Activated CD8-positive, alpha-beta T cell treated with anti-CD3 and anti-CD28 coated beads for 36 hours (primary cell): ENCODE measurements at regions of chr12 and their contacts with region 1.

Region 1: GRCh38 chr12:49967042-49967776 is 5.5 kb downstream of the AQP5 start:
- DNase-seq: peak; percentile 96
- ATAC-seq: peak; percentile 89
- H3K4me3 Mint-ChIP-seq: peak overlapping the region; percentile 61
- H3K27ac Mint-ChIP-seq: no peak overlapping the region
- H3K4me1 Mint-ChIP-seq: no peaks in the 10 kb centered on the region
- H3K27me3 Mint-ChIP-seq: peaks cover 24% of the 10 kb centered on the region
- CTCF ChIP-seq: peak; percentile 92

Region 2: GRCh38 chr12:49789992-49790391 is 177.2 kb before region 1 on chr12:
- CTCF ChIA-PET with region 1: no interaction called
- POLR2A ChIA-PET with region 1: no interaction called
- intact Hi-C with region 1: no loop called
- DNase-seq: no peak
- ATAC-seq: no peak
- H3K4me3 Mint-ChIP-seq: no peak overlapping the region
- H3K27ac Mint-ChIP-seq: no peak overlapping the region
- H3K4me1 Mint-ChIP-seq: no peaks in the 10 kb centered on the region
- H3K27me3 Mint-ChIP-seq: no peaks in the 10 kb centered on the region
- CTCF ChIP-seq: no peak

Region 3: GRCh38 chr12:49866859-49867579 is 100.2 kb before region 1 on chr12:
- CTCF ChIA-PET with region 1: interaction called, 33 read pairs
- POLR2A ChIA-PET with region 1: no interaction called
- intact Hi-C with region 1: no loop called
- DNase-seq: peak; percentile 85
- ATAC-seq: peak; percentile 98
- H3K4me3 Mint-ChIP-seq: no peak overlapping the region
- H3K27ac Mint-ChIP-seq: no peak overlapping the region
- H3K4me1 Mint-ChIP-seq: no peaks in the 10 kb centered on the region
- H3K27me3 Mint-ChIP-seq: no peaks in the 10 kb centered on the region
- CTCF ChIP-seq: peak; percentile 92

Region 4: DNA sequence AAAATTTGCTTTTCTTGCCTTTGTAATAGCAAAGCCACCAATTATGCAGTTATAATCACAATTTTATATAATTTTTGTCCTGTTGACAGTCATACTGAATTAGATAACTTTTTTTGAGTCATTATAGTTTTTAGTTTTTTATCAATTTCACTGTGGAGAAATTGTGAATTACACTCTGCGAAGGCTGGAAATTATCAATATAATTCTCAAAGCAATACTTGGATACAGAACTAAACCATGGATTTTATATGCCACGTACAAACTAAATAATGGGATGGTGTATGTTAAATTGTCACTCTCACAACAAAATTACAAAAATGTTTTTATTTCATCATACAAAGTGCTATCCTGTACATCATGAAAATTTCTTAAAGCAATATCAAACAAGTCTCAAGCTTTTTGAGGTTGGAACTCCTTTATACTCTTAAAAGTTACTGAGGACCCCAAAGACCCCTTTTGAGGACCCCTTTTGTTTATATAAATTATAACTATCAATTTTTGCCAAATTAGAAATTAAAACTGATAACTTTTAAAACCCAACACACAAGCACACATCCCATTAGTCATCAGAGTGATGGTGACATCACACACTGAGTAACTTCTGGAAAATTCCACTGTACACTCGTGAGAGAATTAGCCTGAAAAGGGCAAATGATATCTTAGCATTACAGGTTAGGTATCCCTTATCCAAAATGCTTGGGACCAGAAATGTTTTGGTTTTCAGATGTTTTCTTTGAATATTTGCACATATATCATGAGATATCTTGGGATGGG is 36.5 kb before region 1 on chr12:
- CTCF ChIA-PET with region 1: interaction called, 11 read pairs
- POLR2A ChIA-PET with region 1: no interaction called
- intact Hi-C with region 1: no loop called
- DNase-seq: no peak
- ATAC-seq: peak; percentile 71
- H3K4me3 Mint-ChIP-seq: no peak overlapping the region
- H3K27ac Mint-ChIP-seq: no peak overlapping the region
- H3K4me1 Mint-ChIP-seq: peaks cover 7% of the 10 kb centered on the region
- H3K27me3 Mint-ChIP-seq: peaks cover 9% of the 10 kb centered on the region
- CTCF ChIP-seq: no peak

Region 5: GRCh38 chr12:49983892-49984291 is 16.7 kb after region 1 on chr12:
- CTCF ChIA-PET with region 1: interaction called, 106 read pairs
- POLR2A ChIA-PET with region 1: interaction called, 4 read pairs
- intact Hi-C with region 1: no loop called
- DNase-seq: no peak
- ATAC-seq: no peak
- H3K4me3 Mint-ChIP-seq: no peak overlapping the region
- H3K27ac Mint-ChIP-seq: no peak overlapping the region
- H3K4me1 Mint-ChIP-seq: peaks cover 4% of the 10 kb centered on the region
- H3K27me3 Mint-ChIP-seq: no peaks in the 10 kb centered on the region
- CTCF ChIP-seq: no peak

Region 6: DNA sequence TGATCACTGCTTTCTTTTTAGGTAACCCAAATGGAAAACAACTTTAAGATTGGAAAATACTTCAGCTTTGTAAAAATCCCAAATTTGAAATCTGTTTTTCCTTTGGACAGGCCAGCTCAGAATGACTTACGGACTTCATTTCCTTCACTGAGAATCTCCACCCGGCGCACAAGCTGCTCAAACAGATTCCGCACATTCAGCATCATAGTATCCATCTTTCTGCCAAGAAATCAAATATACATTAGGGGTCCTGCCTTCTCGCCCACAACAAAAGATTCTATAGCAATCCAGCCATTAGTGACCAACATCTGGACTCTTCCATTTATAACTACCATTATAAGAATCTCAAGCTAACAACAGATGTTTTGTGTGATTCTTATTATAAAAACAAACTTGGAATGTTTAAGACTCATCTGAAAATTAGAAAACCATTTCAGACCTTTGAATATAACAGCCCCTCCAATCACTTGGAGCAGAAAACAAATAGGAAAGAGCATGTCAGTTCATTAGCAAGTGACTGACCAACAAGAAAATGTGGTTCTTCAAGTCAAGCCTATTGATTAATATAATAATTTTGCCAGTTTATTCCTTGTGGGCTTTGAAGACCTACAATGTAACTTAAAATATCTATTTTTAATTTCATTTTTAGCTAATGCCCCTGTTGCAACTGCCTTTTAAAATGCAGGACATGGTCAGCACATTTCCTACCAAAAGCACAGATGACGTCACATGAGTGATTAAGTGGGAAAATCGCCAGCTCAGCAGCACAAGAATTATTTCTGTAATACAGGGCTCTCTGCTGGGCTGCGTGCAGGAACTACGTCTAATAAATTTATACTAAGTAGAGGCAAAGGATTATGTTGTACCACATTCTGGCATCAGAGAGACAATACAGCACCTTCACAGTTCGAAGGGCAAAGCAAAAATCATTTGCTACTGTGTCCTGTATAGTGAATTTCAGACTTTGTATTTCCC is 49.6 kb after region 1 on chr12:
- CTCF ChIA-PET with region 1: interaction called, 13 read pairs
- POLR2A ChIA-PET with region 1: no interaction called
- intact Hi-C with region 1: no loop called
- DNase-seq: no peak
- ATAC-seq: no peak
- H3K4me3 Mint-ChIP-seq: no peak overlapping the region
- H3K27ac Mint-ChIP-seq: no peak overlapping the region
- H3K4me1 Mint-ChIP-seq: peaks cover 17% of the 10 kb centered on the region
- H3K27me3 Mint-ChIP-seq: no peaks in the 10 kb centered on the region
- CTCF ChIP-seq: no peak

Region 7: GRCh38 chr12:50050410-50051098 is 83.3 kb after region 1 on chr12:
- CTCF ChIA-PET with region 1: interaction called, 42 read pairs
- POLR2A ChIA-PET with region 1: interaction called, 4 read pairs
- intact Hi-C with region 1: loop called (anchors 5 kb)
- DNase-seq: no peak
- ATAC-seq: peak; percentile 27
- H3K4me3 Mint-ChIP-seq: no peak overlapping the region
- H3K27ac Mint-ChIP-seq: no peak overlapping the region
- H3K4me1 Mint-ChIP-seq: peaks cover under 1% of the 10 kb centered on the region
- H3K27me3 Mint-ChIP-seq: peaks cover 32% of the 10 kb centered on the region
- CTCF ChIP-seq: no peak

Region 8: DNA sequence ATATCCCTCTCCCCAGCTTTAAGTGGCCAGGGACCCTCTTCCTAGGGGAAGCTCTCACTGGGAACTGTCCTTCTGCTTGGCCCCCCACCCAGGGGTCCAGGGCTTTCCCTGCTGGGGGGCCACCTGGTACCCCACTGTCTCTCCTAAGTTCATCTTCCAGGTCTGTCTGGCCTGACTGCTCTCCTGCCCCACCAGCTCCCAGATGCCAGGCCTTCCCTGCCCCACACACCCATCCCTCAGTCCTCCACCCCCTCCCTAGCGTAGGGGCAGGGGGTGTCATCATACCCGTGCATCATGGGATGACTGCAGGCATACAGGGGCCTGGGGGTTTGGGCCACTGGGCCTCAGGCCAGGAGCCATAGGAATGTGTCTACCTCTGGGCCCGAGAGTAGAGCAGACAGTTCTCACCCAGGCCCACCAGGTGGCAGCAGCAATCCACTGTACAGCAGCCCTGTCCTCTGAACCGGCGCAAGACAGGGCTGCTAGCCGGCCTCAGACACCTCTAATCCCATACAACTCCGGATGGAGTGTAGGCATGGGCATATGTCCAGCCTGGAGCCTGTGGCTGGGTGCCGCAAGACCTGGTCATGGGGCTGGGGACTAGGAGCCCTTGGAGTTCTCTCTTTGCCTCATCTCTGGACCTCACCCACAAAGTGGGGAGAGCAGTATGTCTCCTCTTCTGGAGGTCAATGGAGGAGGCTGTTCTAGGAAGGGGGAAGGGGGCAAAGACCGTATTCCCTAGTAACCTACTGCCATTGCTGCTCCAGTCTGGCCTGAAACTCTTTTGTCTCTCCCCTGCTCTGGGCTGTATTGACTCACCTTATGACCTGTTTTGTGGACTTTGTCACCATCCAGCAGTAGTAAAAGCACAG is 108.0 kb after region 1 on chr12:
- CTCF ChIA-PET with region 1: interaction called, 111 read pairs
- POLR2A ChIA-PET with region 1: no interaction called
- intact Hi-C with region 1: loop called (anchors 5 kb)
- DNase-seq: peak; percentile 86
- ATAC-seq: peak; percentile 99
- H3K4me3 Mint-ChIP-seq: no peak overlapping the region
- H3K27ac Mint-ChIP-seq: no peak overlapping the region
- H3K4me1 Mint-ChIP-seq: peaks cover 4% of the 10 kb centered on the region
- H3K27me3 Mint-ChIP-seq: no peaks in the 10 kb centered on the region
- CTCF ChIP-seq: peak; percentile 91